Heart right ventricle (tissue), 16 donors: ENCODE measurements at regions of chr16 and their contacts with region 1.

Region 1: GRCh38 chr16:59487067-59487466 is 753.0 kb upstream of the GOT2 start:
- DNase-seq: no peak
- ATAC-seq: no peak
- H3K4me3 ChIP-seq: no peak overlapping the region
- H3K27ac ChIP-seq: no peak overlapping the region
- H3K4me1 ChIP-seq: no peaks in the 10 kb centered on the region
- H3K27me3 ChIP-seq: no peaks in the 10 kb centered on the region
- CTCF ChIP-seq: no peak

Region 2: DNA sequence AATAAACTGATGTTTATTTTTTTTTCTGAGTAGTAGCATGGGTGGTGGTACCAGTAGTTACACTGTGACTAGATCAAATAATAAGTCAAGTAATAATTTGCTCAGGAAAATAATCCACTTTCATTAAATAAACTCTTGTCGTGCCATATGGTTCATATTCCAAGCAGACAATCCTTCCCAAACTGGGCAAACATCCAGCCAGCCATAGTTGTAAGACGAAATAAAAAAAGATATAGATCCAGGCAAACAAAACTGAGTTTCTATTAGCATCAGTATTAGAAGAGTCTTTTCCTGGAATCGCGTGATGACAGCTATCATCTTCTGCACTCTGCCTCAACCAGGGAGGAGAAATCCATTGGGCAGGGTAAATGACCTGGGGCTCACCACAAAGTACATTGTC is 244.5 kb before region 1 on chr16:
- intact Hi-C with region 1: no loop called
- DNase-seq: no peak
- ATAC-seq: no peak
- H3K4me3 ChIP-seq: no peak overlapping the region
- H3K27ac ChIP-seq: no peak overlapping the region
- H3K4me1 ChIP-seq: no peaks in the 10 kb centered on the region
- H3K27me3 ChIP-seq: no peaks in the 10 kb centered on the region
- CTCF ChIP-seq: no peak

Region 3: DNA sequence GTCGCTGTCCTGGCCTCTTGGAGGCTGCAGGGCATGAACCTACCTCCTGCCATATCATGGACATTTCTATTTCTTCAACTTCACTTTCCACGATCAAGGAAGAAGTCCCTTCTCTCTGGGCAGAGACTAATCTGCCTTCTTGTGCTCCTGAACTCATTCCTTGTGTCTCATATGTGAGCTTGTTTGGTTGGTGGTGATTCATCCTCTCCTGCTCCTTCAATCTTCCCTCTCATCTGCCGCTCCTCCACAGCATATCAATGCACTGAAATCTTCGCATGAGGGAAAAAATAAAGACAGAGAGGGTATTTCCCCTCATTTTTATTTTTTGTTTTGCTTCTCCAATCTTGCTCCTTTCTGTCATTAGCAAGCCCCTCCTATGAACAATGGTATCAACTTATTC is 181.2 kb before region 1 on chr16:
- intact Hi-C with region 1: no loop called
- DNase-seq: no peak
- ATAC-seq: no peak
- H3K4me3 ChIP-seq: no peak overlapping the region
- H3K27ac ChIP-seq: no peak overlapping the region
- H3K4me1 ChIP-seq: no peaks in the 10 kb centered on the region
- H3K27me3 ChIP-seq: no peaks in the 10 kb centered on the region
- CTCF ChIP-seq: no peak

Region 4: GRCh38 chr16:59373632-59374031 is 113.4 kb before region 1 on chr16:
- intact Hi-C with region 1: no loop called
- DNase-seq: no peak
- ATAC-seq: no peak
- H3K4me3 ChIP-seq: no peak overlapping the region
- H3K27ac ChIP-seq: no peak overlapping the region
- H3K4me1 ChIP-seq: no peaks in the 10 kb centered on the region
- H3K27me3 ChIP-seq: no peaks in the 10 kb centered on the region
- CTCF ChIP-seq: no peak

Region 5: GRCh38 chr16:59432896-59433295 is 54.2 kb before region 1 on chr16:
- intact Hi-C with region 1: no loop called
- DNase-seq: no peak
- ATAC-seq: no peak
- H3K4me3 ChIP-seq: no peak overlapping the region
- H3K27ac ChIP-seq: no peak overlapping the region
- H3K4me1 ChIP-seq: no peaks in the 10 kb centered on the region
- H3K27me3 ChIP-seq: no peaks in the 10 kb centered on the region
- CTCF ChIP-seq: no peak

Region 6: DNA sequence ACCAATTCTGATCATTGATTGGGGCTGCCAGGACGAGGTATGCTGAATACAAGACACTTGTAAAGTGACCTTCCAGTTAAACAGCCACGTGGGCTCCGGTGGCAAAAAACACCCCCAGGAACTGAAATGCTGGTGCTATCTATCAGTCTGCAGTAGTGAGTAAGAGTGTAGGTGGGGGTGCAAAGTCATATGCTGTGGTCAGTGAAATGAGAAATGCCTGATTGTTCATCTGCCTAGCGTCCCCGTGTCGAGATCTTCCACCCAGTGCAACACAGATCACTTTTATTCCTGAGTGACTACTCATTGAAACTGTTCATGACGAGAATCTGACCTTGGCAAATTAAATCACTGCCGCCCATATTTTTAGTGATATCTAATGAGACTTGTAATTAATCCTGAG is 53.6 kb after region 1 on chr16:
- intact Hi-C with region 1: loop called in 1 of 10 experiments (anchors 2 kb)
- DNase-seq: no peak
- ATAC-seq: no peak
- H3K4me3 ChIP-seq: no peak overlapping the region
- H3K27ac ChIP-seq: no peak overlapping the region
- H3K4me1 ChIP-seq: no peaks in the 10 kb centered on the region
- H3K27me3 ChIP-seq: no peaks in the 10 kb centered on the region
- CTCF ChIP-seq: no peak